Right ventricle myocardium inferior (tissue), 1 donor: ENCODE measurements at regions of chr2 and their contacts with region 1.

Region 1: GRCh38 chr2:9843229-9844035 is at the start of gene TAF1B:
- DNase-seq: peak; percentile 93
- ATAC-seq: peak; percentile 97
- total RNA-seq, gene TAF1B: 6.3 TPM

Region 2: DNA sequence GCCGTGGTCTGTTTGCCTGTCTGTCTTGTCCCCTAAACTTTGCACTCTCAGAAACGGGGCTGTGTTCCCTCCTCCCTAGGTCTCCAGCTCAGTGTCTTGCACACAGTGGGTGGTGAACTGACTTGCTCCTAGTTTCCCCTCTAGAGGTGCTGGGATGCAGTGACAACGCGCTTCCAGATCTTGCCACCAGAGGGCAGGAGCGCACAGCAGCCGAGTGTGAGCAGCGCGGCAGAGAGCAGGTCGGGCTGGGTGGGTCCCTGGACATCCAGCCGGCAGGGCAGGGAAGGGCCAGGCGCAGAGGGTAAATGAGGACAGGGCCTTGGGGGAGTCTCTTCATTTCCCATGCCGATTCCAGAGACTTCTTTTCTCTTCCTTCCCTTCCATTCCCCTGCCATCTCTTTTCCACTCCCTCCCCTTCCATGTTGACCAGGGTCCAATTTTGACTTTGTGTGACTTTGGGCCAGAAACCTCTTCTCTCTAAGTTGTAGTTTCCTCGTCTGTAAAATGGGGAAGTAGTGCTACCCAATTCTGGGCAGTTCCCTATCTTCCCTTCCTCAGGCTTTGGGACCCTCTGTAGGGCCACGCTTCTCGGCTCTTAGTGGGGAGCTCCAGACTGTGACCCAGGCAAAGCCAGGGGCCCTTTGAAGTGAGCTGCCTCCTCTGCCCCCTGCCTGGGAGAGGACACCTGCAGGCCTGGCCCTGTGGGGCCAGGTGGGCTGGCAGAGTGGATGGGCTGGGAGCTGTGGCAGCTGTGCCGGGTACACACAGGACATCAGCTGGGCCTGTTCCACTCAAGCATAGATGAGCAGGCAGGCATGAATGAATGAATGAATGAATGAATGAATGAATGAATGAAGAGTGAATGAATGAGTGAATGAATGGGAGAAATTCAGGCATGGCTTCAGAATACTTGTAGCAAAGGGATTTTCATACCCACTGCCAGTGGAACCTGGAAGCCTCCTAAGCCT is 43.5 kb before region 1 on chr2:
- intact Hi-C with region 1: loop called (anchors 5 kb)
- DNase-seq: peak; percentile 91
- ATAC-seq: peak; percentile 83

Region 3: GRCh38 chr2:9857814-9858729 is 14.6 kb after region 1 on chr2:
- intact Hi-C with region 1: no loop called
- DNase-seq: no peak
- ATAC-seq: no peak

Region 4: DNA sequence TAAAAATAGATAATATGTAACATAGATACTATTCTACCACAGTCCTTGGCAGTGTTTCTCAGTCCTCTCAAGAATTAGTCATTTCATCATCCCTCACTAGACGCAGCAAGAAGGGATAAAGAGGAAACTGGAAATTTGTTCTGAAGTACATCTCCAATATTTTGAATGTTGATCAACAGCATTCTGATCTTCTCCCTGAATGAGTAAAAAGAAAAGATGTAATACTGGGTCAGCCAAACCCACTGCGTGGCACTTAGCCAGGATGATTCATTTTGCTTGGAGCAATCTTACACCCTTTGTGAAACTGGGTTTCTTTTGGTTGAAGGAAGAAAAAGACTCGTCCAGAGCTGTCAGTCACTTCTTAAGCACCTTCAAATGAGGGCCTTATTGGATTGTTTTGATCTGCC is 53.9 kb after region 1 on chr2:
- intact Hi-C with region 1: no loop called
- DNase-seq: peak; percentile 63
- ATAC-seq: peak; percentile 69

Region 5: DNA sequence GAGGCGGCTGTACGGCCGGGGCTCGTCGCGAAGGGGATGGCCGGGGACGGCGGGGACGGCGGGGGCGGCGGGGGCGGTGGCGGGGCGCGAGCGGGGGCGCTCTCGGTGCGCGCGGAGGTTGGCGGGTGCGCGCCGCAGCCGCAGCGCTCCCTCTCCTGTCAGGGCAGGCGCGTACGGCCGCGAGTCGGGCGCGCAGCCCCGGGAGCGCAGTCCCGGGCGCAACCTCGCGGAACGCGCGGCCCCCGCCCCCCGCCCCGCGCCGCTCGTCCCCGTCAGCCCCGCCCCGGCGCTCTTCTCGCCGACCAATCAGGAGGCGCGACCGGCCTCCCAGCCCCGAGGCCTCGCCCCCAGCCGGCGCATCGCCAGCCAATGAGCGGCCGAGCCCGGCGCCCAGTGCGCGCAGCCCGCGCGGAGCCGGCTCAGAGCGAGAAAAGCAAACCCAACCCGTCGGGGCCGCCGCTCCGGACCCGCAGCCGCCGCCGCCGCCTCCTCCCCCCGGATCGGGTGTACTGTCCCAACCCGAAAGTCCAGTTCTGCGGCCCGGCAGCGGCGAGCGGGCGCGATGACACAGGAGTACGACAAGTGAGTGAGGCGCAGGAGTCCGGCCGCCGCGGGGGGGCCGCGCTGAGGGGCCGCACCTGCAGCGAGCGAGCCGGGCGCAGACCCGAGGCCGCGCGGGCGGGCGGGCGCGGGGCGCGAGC is 108.0 kb after region 1 on chr2 and contains the start of gene GRHL1:
- intact Hi-C with region 1: loop called (anchors 5 kb)
- DNase-seq: peak; percentile 96
- ATAC-seq: peak; percentile 98
- total RNA-seq, gene GRHL1: 0.81 TPM